Posterior vena cava (tissue), 2 donors: ENCODE measurements at regions of chr17 and their contacts with region 1.

Region 1: GRCh38 chr17:77863814-77864161 is 94.7 kb upstream of the TNRC6C start:
- DNase-seq: peak; percentile 85

Region 2: DNA sequence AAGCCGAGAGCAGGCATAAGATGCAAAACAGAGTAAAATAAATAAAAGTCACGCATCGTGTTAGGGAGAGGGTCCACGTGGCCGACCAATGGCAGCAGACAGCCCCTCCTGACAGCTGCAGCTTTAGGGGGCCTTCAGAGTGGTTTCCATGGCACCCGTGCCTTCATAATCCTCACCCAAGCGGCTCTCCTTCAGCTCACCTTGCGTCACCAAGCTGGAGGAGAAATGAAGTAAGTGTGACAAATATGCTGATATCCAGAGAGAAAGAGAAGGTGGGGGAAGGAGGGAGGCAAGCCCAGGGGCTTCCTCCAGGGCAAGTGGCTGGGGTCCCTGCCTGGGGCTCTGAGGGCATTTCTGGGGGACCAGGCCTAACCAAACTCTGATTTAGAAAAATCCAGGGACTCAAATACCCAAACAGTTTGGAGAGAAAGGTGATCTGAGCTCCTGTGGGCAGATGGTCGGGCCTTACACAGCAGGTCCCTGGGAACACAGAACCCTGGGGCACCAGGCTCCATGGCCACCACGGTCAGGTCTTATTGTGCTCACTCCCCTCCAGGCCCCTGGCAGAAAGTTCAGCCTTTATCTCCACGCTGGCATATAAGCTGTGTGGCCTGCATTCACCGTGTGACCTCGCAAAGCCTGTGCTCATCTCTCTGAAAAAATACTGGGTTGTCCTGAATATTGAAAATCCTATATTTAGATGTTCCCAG is 14.0 kb after region 1 on chr17:
- intact Hi-C with region 1: loop called in 1 of 2 experiments (anchors 1 kb)
- DNase-seq: no peak